ENCODE measurements at regions of chr1 and their contacts with region 1.

Region 1: DNA sequence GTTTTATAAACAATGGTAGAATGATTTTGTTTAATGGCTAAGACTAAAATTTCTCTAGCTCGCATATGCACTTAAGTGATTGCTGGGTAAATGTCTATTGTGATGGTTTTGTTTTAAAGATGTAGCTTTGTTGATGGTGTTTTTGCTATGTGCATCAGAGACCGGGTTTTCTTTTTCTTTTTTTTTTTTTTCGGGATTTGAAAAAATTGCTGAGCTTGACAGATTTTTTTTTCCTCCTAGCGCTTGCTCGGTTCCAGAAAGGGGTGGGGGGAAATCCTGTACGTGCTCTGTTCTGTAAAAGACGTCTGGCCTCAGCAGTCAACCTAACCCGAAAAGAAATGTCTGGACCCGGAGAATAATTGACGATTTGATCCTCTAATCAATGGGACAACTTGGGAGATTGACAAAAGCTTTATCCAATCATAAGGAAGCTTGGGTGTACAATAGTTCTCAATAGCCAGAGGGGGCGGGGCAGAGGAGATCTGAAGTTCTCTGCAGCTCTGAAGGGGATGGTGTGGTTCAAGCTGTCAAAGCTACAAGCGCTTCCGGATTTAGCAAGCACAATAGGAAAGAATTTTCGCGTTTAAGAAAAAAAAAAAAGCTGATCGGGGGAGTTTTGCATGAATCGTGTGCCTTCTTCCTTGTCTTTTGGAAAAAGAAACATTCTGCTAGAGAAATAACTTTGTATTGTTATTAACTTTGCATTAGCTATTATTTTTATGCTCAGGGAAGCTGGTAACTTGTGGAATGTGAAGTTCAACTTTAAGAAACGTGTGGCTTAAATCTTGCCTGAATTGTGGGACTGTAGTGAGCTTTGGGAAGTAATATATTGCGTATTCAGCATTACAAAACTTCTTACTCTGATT is 4.5 kb upstream of the NFIA start:
- DNase-seq: peak; percentile 95
- H3K4me3 Mint-ChIP-seq: peak overlapping the region; percentile 96
- H3K27ac Mint-ChIP-seq: peak overlapping the region; percentile 93
- H3K4me1 Mint-ChIP-seq: peaks cover 53% of the 10 kb centered on the region
- H3K27me3 Mint-ChIP-seq: no peaks in the 10 kb centered on the region
- CTCF ChIP-seq: no peak

Region 2: GRCh38 chr1:61049850-61050540 is 27.9 kb before region 1 on chr1:
- CTCF ChIA-PET with region 1: interaction called, 14 read pairs
- intact Hi-C with region 1: no loop called
- DNase-seq: peak; percentile 93
- H3K4me3 Mint-ChIP-seq: peak overlapping the region; percentile 71
- H3K27ac Mint-ChIP-seq: peak overlapping the region; percentile 33
- H3K4me1 Mint-ChIP-seq: peaks cover 19% of the 10 kb centered on the region
- H3K27me3 Mint-ChIP-seq: peaks cover 27% of the 10 kb centered on the region
- CTCF ChIP-seq: peak; percentile 97

Region 3: GRCh38 chr1:61132176-61133001 is 54.5 kb after region 1 on chr1:
- CTCF ChIA-PET with region 1: no interaction called
- intact Hi-C with region 1: loop called (anchors 2 kb)
- DNase-seq: peak; percentile 25
- H3K4me3 Mint-ChIP-seq: peak overlapping the region; percentile 48
- H3K27ac Mint-ChIP-seq: peak overlapping the region; percentile 58
- H3K4me1 Mint-ChIP-seq: peaks cover 33% of the 10 kb centered on the region
- H3K27me3 Mint-ChIP-seq: no peaks in the 10 kb centered on the region
- CTCF ChIP-seq: no peak

Region 4: GRCh38 chr1:61142751-61143494 is 65.0 kb after region 1 on chr1:
- CTCF ChIA-PET with region 1: interaction called, 10 read pairs
- intact Hi-C with region 1: no loop called
- DNase-seq: no peak
- H3K4me3 Mint-ChIP-seq: no peak overlapping the region
- H3K27ac Mint-ChIP-seq: no peak overlapping the region
- H3K4me1 Mint-ChIP-seq: peaks cover 40% of the 10 kb centered on the region
- H3K27me3 Mint-ChIP-seq: no peaks in the 10 kb centered on the region
- CTCF ChIP-seq: no peak

Region 5: DNA sequence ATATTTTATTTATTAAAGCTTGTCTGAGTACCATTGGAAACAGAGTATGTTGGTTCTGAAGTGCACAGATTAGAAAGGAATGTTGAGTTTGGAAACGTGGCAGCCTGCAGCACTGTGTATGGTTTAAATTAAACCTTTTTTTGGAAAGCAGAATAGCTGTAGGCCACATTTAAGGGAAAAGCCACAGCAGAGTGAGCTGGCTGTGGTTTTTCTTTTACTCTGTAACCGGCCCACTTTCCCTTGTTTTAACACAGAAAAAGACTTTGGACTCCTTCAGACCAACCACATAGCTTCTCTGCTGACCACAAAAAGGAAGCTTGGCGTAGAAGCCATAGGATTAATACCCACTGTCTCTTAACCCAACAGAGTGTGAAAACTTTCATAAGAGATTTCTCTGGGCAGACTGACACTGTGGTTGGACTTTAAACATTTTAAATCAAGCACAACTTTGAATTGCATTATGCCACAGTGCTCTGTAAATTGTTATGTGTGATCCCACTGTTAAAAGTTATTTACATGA is 79.6 kb after region 1 on chr1:
- CTCF ChIA-PET with region 1: interaction called, 3 read pairs
- intact Hi-C with region 1: loop called (anchors 5 kb)
- DNase-seq: no peak
- H3K4me3 Mint-ChIP-seq: no peak overlapping the region
- H3K27ac Mint-ChIP-seq: no peak overlapping the region
- H3K4me1 Mint-ChIP-seq: peaks cover 43% of the 10 kb centered on the region
- H3K27me3 Mint-ChIP-seq: no peaks in the 10 kb centered on the region
- CTCF ChIP-seq: no peak

Region 6: GRCh38 chr1:61226784-61227567 is 149.1 kb after region 1 on chr1:
- CTCF ChIA-PET with region 1: no interaction called
- intact Hi-C with region 1: loop called (anchors 10 kb)
- DNase-seq: no peak
- H3K4me3 Mint-ChIP-seq: no peak overlapping the region
- H3K27ac Mint-ChIP-seq: no peak overlapping the region
- H3K4me1 Mint-ChIP-seq: peaks cover 26% of the 10 kb centered on the region
- H3K27me3 Mint-ChIP-seq: no peaks in the 10 kb centered on the region
- CTCF ChIP-seq: no peak